AG04450 (cell line): ENCODE measurements at regions of chr1 and their contacts with region 1.

Region 1: GRCh38 chr1:59601041-59601441 is 213.7 kb upstream of the HOOK1 start:
- DNase-seq: no peak
- H3K4me3 ChIP-seq: no peak overlapping the region
- H3K27ac ChIP-seq: no peak overlapping the region
- H3K27me3 ChIP-seq: no peaks in the 10 kb centered on the region
- CTCF ChIP-seq: no peak

Region 2: DNA sequence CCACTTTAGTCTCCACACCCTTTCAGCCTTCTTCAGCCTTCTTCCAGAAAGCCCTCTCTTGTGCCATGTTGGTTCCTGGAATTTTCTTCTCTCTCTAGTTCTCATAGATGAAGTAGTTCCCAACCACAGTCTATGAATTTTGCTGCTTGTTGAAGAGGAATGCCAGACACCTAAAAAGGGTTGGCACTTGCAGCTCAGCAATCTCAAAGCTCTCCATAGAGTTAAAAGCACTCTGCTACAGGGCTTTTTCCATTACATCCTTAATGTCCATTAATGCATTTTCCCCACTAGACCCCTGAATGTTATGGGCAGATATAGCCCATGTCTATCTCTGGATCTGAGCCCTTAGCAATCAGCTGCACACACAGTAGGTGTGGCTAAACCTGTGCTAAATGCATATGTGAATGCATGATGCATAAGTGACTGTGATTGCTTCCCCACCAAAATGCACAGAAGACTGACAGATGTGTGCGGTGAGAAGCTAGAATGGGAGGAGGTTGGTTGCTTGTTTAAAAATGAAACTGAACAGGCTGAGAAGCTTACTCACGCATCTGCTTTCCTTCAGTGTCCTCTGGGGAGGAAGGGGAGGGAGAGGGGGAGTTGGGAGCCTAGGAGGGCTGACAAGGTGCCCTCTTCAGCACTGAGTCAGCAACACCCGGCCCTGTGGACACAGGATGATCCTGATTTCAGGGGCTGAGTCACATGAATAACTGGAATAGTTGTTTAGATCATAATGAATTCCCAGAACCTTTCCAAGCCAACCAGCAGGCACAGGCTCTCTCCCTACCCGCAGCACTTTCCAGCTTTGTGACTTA is 450.3 kb before region 1 on chr1:
- CTCF ChIA-PET with region 1: interaction called, 10 read pairs
- POLR2A ChIA-PET with region 1: no interaction called
- DNase-seq: peak; percentile 99
- H3K4me3 ChIP-seq: peak overlapping the region; percentile 35
- H3K27ac ChIP-seq: peak overlapping the region; percentile 97
- H3K27me3 ChIP-seq: no peaks in the 10 kb centered on the region
- CTCF ChIP-seq: peak; percentile 2; the same call in 1 of the 2 replicates

Region 3: GRCh38 chr1:59543211-59543668 is 57.8 kb before region 1 on chr1:
- CTCF ChIA-PET with region 1: no interaction called
- POLR2A ChIA-PET with region 1: no interaction called
- DNase-seq: no peak
- H3K4me3 ChIP-seq: no peak overlapping the region
- H3K27ac ChIP-seq: no peak overlapping the region
- H3K27me3 ChIP-seq: no peaks in the 10 kb centered on the region
- CTCF ChIP-seq: no peak